Aorta (tissue), 5 donors: ENCODE measurements at regions of chrX and their contacts with region 1.

Region 1: DNA sequence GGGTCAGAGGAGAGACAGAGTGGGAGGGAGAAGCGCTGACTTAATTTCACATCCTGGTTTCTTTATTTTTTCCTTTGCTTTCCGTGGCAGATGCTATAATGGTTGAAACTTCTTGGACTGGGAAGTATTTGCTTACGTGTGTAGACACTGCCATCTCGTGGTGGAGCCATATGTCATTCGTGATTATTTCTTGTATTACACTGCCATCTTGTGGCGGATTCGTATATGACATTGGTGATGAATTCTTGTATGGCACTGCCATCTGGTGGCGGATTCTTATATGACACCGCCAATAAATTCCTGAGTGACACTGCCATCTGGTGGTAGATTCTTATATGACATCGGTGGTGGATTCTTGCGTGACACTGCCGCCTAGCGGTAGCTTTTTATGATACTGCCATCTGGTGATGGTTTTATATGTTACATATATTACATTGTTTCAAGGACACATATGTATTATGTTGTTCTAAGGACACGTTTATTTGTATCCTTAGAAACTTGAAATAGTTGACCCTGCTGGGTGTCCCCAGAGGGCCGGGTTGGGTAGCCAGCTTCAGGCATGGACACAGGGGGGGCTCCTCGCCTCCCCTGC is 37.3 kb upstream of the CLCN4 start:
- DNase-seq: peak in 1 of 2 donors; percentile 66
- ATAC-seq: peak; percentile 93
- H3K4me3 ChIP-seq: no peak overlapping the region
- H3K27ac ChIP-seq: no peak overlapping the region
- H3K4me1 ChIP-seq: no peaks in the 10 kb centered on the region
- H3K27me3 ChIP-seq: no peaks in the 10 kb centered on the region

Region 2: DNA sequence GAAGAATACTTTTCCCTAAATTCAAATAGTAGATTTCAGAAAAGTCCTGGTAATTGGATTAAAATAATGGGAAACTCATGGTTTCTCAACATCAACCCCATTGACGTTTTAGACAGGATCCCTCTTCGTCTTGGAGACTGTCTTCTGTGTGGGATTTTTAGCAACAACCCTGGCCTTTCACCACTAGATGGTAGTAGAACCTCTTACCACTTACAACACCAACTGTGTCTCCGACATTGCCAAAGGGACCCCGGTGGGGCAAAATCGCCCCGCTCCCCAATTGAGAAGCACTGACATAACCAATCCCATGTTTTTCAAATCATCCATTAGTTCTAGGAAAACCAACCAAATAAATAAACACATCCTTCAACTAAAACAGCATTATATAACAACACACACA is 1370.6 kb before region 1 on chrX:
- intact Hi-C with region 1: loop called in 1 of 2 experiments (anchors 5 kb)
- DNase-seq: no peak
- ATAC-seq: no peak
- H3K4me3 ChIP-seq: no peak overlapping the region
- H3K27ac ChIP-seq: no peak overlapping the region
- H3K4me1 ChIP-seq: no peaks in the 10 kb centered on the region
- H3K27me3 ChIP-seq: no peaks in the 10 kb centered on the region

Region 3: DNA sequence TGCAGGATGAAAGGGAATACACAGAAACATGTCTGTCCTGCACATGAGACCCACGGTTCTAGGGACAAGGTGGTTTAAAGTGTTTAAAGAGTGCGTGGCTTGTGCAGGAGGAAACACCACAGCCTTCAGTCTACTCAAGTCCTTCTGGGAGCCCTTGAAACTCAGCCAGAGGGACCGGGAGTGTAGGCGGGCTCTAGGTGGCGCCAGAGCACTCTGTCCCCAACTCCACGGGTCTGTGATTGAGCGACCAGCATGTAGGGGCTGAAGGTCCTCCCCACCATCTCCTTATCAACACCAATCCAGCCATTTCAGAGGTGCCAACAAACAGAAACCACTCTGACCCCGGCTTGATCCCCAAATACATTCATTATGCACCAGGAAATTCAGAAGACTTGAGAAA is 234.3 kb before region 1 on chrX:
- intact Hi-C with region 1: loop called in 1 of 2 experiments (anchors 5 kb)
- DNase-seq: peak in 1 of 2 donors; percentile 78
- ATAC-seq: no peak
- H3K4me3 ChIP-seq: no peak overlapping the region
- H3K27ac ChIP-seq: no peak overlapping the region
- H3K4me1 ChIP-seq: no peaks in the 10 kb centered on the region
- H3K27me3 ChIP-seq: no peaks in the 10 kb centered on the region

Region 4: DNA sequence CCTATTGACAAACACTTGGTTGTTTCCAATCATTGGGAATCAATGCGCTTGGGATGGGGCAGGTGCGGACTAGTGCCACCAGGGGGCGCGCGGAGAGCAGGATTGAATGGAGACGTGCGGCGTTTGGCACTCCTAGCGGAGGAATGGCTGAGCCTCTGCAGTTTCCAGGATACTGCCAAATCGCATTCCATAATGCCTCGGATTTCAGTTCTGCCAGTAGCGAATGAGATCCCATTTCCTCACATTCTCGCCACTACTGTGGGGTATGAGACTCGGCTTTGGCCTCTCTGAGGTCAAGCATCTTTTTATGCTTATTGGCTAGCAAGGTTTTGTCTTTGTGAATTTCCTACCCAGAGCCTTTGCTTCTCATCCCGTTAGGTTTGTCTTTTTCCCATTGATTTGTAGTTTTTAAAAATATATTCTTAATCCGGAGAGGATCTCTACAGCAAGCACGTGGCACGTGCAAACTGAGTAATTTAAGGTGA is 123.6 kb before region 1 on chrX:
- intact Hi-C with region 1: loop called (anchors 1 to 2 kb)
- DNase-seq: peak; percentile 88 to 95
- ATAC-seq: peak; percentile 94
- H3K4me3 ChIP-seq: no peak overlapping the region
- H3K27ac ChIP-seq: no peak overlapping the region
- H3K4me1 ChIP-seq: no peaks in the 10 kb centered on the region
- H3K27me3 ChIP-seq: no peaks in the 10 kb centered on the region

Region 5: GRCh38 chrX:10014462-10015356 is 104.8 kb before region 1 on chrX:
- intact Hi-C with region 1: loop called (anchors 5 kb)
- DNase-seq: peak; percentile 95 to 96
- ATAC-seq: peak; percentile 91
- H3K4me3 ChIP-seq: peak overlapping the region; percentile 54 to 93
- H3K27ac ChIP-seq: peak overlapping the region; percentile 79 to 89
- H3K4me1 ChIP-seq: no peaks in the 10 kb centered on the region
- H3K27me3 ChIP-seq: no peaks in the 10 kb centered on the region